Left lung (tissue), 14 donors: ENCODE measurements at regions of chr16 and their contacts with region 1.

Region 1: DNA sequence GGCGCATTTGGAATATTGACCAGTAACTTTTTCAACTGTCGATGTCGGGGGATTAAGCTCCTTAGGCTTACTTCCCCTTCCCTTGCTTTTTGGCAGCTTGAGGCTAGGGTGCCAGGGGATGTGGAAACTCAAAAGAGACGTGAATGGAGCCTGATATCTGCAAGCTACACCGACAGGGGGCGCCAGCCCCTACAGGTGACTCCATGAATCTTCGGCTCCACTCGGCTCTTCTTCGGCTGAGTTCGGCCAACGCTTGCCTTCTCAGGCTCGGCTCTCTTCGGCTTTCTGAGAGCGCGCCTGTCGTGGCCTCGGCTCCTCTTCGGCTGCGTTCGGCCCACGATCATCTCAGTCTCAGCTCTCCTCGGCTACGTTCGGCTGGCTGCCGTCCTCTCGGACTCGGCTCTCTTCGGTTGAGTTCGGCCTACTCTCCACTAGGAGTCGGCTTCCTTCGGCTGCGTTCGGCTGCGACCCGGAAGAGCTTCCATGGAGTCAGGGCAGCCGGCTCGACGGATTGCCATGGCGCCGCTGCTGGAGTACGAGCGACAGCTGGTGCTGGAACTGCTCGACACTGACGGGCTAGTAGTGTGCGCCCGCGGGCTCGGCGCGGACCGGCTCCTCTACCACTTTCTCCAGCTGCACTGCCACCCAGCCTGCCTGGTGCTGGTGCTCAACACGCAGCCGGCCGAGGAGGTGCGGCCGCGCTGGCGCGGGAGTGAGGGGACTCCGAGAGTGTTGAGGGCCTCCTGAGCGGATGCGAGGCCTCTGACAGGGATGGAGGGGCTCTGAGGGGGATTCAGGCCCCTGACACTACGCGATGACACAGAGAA is at the start of gene ERCC4:
- DNase-seq: peak; percentile 98 to 100 (median 99)
- ATAC-seq: peak; percentile 98
- H3K4me3 ChIP-seq: peak within 1 kb of the TSS; percentile 82 to 95
- H3K27ac ChIP-seq: peak within 1 kb of the TSS; percentile 10 to 87
- H3K4me1 ChIP-seq: peaks cover 4 to 18% of the 10 kb centered on the region in 2 donors
- H3K27me3 ChIP-seq: no peaks in the 10 kb centered on the region
- CTCF ChIP-seq: peak; percentile 77 to 93
- polyA plus RNA-seq, gene ERCC4: 14.4 to 20.1 (median 17.8) TPM

Region 2: GRCh38 chr16:13005848-13006247 is 914.0 kb before region 1 on chr16:
- intact Hi-C with region 1: no loop called
- DNase-seq: no peak
- ATAC-seq: no peak
- H3K4me3 ChIP-seq: no peak overlapping the region
- H3K27ac ChIP-seq: no peak overlapping the region
- H3K4me1 ChIP-seq: no peaks in the 10 kb centered on the region
- H3K27me3 ChIP-seq: peaks cover 0 to 4% of the 10 kb centered on the region in 2 donors
- CTCF ChIP-seq: no peak

Region 3: GRCh38 chr16:13982451-13982850 is 62.6 kb after region 1 on chr16:
- intact Hi-C with region 1: no loop called
- DNase-seq: no peak
- ATAC-seq: no peak
- H3K4me3 ChIP-seq: no peak overlapping the region
- H3K27ac ChIP-seq: no peak overlapping the region
- H3K4me1 ChIP-seq: no peaks in the 10 kb centered on the region
- H3K27me3 ChIP-seq: no peaks in the 10 kb centered on the region
- CTCF ChIP-seq: no peak

Region 4: DNA sequence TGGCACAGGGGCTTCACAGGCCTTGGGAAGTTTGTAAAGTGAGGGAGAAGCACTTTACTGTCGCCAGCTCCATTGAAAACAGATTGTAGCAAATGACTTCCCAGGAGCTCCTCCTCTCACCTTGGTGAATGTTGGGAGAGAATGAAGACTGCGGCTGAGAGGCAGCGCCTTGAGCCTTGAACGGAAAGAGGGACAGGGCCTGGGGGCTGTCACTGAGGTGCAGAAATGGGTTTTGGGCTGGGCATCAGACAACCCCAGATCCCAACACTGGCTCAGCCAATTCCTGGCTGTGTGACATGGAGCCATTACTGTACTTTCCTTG is 150.6 kb after region 1 on chr16:
- intact Hi-C with region 1: no loop called
- DNase-seq: no peak
- ATAC-seq: peak; percentile 9
- H3K4me3 ChIP-seq: peak overlapping the region; percentile 80 to 96
- H3K27ac ChIP-seq: peak overlapping the region; percentile 78 to 80
- H3K4me1 ChIP-seq: peaks cover 6 to 18% of the 10 kb centered on the region in 2 donors
- H3K27me3 ChIP-seq: no peaks in the 10 kb centered on the region
- CTCF ChIP-seq: no peak

Region 5: GRCh38 chr16:14186007-14186794 is 266.3 kb after region 1 on chr16:
- intact Hi-C with region 1: loop called in 1 of 2 experiments (anchors 10 kb)
- DNase-seq: peak in 3 of 4 donors; percentile 31 to 44 (median 38)
- ATAC-seq: peak; percentile 60
- H3K4me3 ChIP-seq: peak overlapping the region; percentile 10 to 28
- H3K27ac ChIP-seq: peak overlapping the region; percentile 58 to 64
- H3K4me1 ChIP-seq: peaks cover 3 to 25% of the 10 kb centered on the region in 2 donors
- H3K27me3 ChIP-seq: no peaks in the 10 kb centered on the region
- CTCF ChIP-seq: peak; percentile 28 to 38

Region 6: DNA sequence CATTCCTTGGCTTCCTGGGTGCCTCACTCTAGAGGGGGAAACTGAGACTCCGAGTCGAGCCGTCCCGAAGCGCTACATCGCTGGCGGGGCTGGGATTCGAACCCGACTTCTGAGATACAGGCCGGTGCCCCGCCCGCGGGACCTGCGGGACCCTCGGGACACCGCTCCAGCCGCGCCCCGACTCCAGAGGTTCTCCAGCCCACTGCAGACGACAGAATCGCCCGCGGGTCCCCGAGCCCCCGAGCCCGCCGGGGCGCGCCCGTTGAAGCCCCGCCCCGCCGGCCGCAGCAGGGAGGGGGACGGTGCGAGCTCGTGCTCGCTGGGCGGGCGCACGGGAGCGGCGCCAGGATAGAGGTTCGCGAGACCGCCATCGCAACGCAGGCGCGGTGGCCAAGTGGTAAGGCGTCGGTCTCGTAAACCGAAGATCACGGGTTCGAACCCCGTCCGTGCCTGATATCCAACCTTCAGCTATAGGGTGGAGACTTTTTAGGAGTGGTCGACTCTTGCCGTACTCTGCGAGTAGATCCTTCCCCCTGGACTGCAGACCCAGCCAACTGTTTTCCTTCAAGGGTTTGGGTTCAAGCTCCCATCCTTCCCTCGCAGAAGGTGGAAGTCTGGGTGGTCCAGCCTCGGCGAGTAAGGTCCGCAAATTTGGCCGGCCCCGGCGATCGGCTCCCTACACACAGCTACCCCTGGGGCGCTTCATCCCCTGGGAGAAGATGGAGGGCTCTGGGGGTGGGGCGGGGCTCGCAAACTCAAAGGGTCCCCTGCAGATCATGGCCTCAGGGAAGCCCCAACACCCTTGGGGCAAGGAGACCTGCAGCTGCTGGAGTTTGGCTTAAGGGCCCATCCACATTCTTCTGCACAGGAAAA is 365.9 kb after region 1 on chr16:
- intact Hi-C with region 1: loop called in 1 of 2 experiments (anchors 10 kb)
- DNase-seq: peak; percentile 91 to 97 (median 94)
- ATAC-seq: peak; percentile 92
- H3K4me3 ChIP-seq: peak overlapping the region; percentile 77 to 80
- H3K27ac ChIP-seq: peak overlapping the region; percentile 79 to 86
- H3K4me1 ChIP-seq: peaks cover 3 to 17% of the 10 kb centered on the region in 2 donors
- H3K27me3 ChIP-seq: no peaks in the 10 kb centered on the region
- CTCF ChIP-seq: no peak